ENCODE measurements at regions of chr10 and their contacts with region 1.

Region 1: DNA sequence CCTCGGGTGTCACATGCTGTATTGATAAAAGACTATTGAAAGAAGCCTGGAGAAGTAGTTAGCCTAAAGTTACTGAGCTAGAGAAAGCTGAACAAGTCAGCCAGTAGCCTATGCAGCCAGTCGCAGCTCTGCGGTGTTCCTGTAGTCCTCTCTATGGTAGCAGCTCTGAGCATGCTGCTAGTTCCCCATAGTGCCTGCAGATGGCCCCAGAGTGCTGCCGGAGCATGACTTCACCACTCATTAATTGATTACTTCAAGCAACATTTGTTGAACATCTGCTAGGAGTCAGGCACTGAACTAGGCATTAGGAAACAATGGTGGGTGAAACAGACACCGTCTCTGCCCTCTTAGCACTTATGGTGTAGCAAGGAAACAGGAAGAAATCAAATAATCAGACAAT is 422.7 kb downstream of the SORCS3 start:
- DNase-seq: no peak
- ATAC-seq: no peak

Region 2: DNA sequence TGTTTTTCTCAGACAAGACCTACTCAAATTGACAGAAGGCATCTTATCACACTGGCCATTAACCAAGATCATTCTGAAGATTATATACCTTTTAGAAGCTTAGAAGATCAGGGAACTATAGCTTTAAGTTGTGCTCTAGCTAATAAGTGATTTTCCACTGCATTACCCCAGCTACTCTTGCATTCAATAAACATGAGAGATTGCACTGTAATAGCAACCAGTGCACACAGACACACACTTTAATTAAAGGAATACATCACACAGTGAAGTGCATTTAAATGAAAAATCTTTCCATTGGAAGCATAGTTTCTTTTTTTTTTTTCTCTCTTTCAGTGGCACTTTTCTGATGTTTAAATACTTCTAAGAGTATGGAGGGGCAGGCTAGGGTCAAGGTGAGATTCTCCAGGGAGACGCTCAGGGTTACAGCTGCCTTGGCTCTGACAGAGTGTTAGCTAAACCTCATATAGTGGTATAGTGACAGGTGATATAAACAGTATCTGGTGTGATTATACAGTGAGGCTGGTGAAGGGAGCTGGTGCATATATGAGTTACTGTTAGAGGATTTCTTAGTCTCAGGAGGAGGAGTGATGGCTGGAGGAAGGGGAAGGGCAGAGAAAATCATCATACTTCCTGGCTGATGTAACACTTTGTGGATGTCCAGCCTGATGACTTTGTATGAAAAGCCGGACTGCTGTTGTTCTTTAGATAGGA is 53.2 kb before region 1 on chr10:
- intact Hi-C with region 1: no loop called
- DNase-seq: no peak
- ATAC-seq: no peak

Region 3: DNA sequence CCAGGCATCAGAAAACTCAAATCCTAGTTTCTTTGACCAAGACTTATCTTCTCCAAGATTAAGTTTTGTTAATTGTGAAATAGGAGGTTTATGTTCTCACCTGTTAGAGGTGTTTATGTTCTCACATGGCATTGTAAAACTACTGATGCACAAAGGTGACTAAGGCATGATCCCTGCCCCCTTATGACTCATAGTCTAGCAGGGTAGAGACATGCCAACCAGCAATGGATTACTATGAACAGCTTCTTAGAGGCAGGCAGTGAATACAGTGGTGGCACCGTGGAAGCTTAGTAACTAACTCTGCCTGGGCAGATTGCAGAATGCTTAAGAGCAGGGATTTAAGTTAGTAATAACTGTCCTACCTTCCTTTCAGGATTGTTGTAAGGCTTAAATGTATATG is 21.8 kb before region 1 on chr10:
- intact Hi-C with region 1: no loop called
- DNase-seq: no peak
- ATAC-seq: no peak

Region 4: GRCh38 chr10:105161767-105162166 is 98.0 kb after region 1 on chr10:
- intact Hi-C with region 1: no loop called
- DNase-seq: no peak
- ATAC-seq: no peak

Region 5: DNA sequence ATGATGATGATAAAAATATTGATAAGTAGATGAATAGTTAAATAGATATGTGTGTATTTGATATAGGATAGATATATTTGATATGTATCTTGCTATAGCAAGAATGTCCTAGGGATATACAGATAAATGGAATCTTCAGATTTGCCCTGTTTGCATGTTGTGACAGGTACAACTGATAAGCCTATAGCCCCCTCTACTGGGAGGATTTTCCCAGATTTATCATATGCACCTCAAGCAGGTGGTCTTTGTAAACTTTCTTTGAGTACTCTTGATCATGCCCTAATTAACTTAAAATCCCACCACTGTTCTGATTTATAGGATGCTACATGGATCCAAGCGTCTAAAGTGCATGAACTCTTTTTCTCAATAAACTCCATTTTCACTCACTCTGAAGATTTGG is 628.0 kb after region 1 on chr10:
- intact Hi-C with region 1: loop called in 1 of 2 experiments (anchors 2 kb)
- DNase-seq: no peak
- ATAC-seq: no peak